IMR-90 (cell line): ENCODE measurements at regions of chr5 and their contacts with region 1.

Region 1: GRCh38 chr5:96336351-96336985 is 96.6 kb downstream of the PCSK1 start:
- DNase-seq: peak; percentile 93
- ATAC-seq: peak; percentile 88
- H3K4me3 ChIP-seq: no peak overlapping the region
- H3K27ac ChIP-seq: peak overlapping the region; percentile 95; the same call in 1 of the 2 replicates
- H3K4me1 ChIP-seq: peaks cover 16% of the 10 kb centered on the region
- H3K27me3 ChIP-seq: no peaks in the 10 kb centered on the region
- CTCF ChIP-seq: peak; percentile 89
- POLR2A ChIP-seq: no peak
- RAD21 ChIP-seq: peak; percentile 97

Region 2: DNA sequence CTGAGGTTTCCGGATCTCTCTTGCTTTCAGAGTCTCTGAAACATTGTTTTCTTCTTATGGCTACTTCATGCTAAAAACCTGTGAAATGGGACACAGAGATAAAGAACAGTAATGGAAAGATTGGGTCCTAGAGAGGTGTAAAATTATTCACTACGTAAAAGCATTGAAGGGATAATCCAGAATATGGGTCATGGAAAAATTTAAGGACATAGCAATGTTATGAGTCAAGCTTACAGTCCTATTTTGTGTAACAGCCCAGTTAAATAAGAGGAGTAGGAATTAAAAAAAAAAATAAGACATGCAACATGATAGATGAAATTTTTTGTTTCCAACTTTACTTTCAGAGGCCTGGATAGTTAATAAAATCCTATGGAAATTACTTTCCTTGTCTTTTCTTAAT is 312.9 kb before region 1 on chr5:
- CTCF ChIA-PET with region 1: no interaction called
- POLR2A ChIA-PET with region 1: no interaction called
- dilution Hi-C with region 1: no loop called
- in situ Hi-C with region 1: no loop called
- intact Hi-C with region 1: loop called (anchors 5 kb)
- DNase-seq: peak; percentile 69
- ATAC-seq: peak; percentile 41; the same call in 1 of the 2 replicates
- H3K4me3 ChIP-seq: no peak overlapping the region
- H3K27ac ChIP-seq: peak overlapping the region; percentile 3; the same call in 1 of the 2 replicates
- H3K4me1 ChIP-seq: peaks cover 17% of the 10 kb centered on the region
- H3K27me3 ChIP-seq: no peaks in the 10 kb centered on the region
- CTCF ChIP-seq: no peak
- POLR2A ChIP-seq: no peak
- RAD21 ChIP-seq: no peak

Region 3: GRCh38 chr5:96113170-96113939 is 223.1 kb before region 1 on chr5:
- CTCF ChIA-PET with region 1: interaction called, 3 read pairs
- POLR2A ChIA-PET with region 1: no interaction called
- dilution Hi-C with region 1: no loop called
- in situ Hi-C with region 1: no loop called
- intact Hi-C with region 1: loop called (anchors 10 kb)
- DNase-seq: no peak
- ATAC-seq: no peak
- H3K4me3 ChIP-seq: no peak overlapping the region
- H3K27ac ChIP-seq: no peak overlapping the region
- H3K4me1 ChIP-seq: peaks cover 12% of the 10 kb centered on the region
- H3K27me3 ChIP-seq: no peaks in the 10 kb centered on the region
- CTCF ChIP-seq: no peak
- POLR2A ChIP-seq: no peak
- RAD21 ChIP-seq: no peak

Region 4: DNA sequence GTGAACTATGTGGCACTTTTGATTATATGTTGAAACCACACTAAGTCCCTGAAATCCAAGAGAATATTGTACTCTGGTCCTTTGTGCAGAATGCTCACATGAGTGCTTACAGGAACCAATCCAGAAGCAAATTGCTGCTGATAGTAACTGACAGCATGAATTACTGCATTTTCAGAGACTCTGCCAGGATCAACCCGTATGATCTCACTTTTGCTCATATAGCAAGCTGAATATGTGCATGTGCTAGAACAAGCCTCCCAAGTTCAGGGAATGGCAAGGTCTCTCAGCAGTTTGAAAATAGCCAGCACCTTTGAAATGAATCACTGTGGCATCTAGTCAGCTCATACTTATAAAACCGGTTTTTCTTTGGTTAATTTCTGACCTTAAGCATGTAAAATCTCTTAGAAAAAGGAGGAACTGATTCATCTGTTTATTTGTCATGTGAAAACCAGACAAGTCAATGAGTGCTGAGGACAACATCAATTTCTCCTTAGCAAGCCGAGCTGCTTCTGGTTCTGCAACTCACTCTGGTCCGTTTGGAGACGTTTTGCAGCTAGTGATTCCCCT is 159.1 kb before region 1 on chr5:
- CTCF ChIA-PET with region 1: no interaction called
- POLR2A ChIA-PET with region 1: no interaction called
- dilution Hi-C with region 1: no loop called
- in situ Hi-C with region 1: no loop called
- intact Hi-C with region 1: loop called (anchors 10 kb)
- DNase-seq: peak; percentile 91
- ATAC-seq: peak; percentile 55
- H3K4me3 ChIP-seq: no peak overlapping the region
- H3K27ac ChIP-seq: peak overlapping the region; percentile 47; the same call in 1 of the 2 replicates
- H3K4me1 ChIP-seq: peaks cover 19% of the 10 kb centered on the region
- H3K27me3 ChIP-seq: no peaks in the 10 kb centered on the region
- CTCF ChIP-seq: no peak
- POLR2A ChIP-seq: no peak
- RAD21 ChIP-seq: no peak; the same call in 1 of the 2 replicates

Region 5: GRCh38 chr5:96256778-96257470 is 79.5 kb before region 1 on chr5:
- CTCF ChIA-PET with region 1: interaction called, 3 read pairs
- POLR2A ChIA-PET with region 1: no interaction called
- dilution Hi-C with region 1: no loop called
- in situ Hi-C with region 1: no loop called
- intact Hi-C with region 1: loop called (anchors 1 kb)
- DNase-seq: peak; percentile 96
- ATAC-seq: peak; percentile 22
- H3K4me3 ChIP-seq: no peak overlapping the region
- H3K27ac ChIP-seq: peak overlapping the region; percentile 8; the same call in 1 of the 2 replicates
- H3K4me1 ChIP-seq: peaks cover 23% of the 10 kb centered on the region
- H3K27me3 ChIP-seq: no peaks in the 10 kb centered on the region
- CTCF ChIP-seq: peak; percentile 18; the same call in 1 of the 2 replicates
- POLR2A ChIP-seq: no peak
- RAD21 ChIP-seq: no peak